ENCODE measurements at regions of chr4 and their contacts with region 1.

Region 1: GRCh38 chr4:58061970-58062369 is 951.8 kb upstream of the IGFBP7 start:
- DNase-seq: no peak
- ATAC-seq: no peak
- H3K4me3 ChIP-seq: no peak overlapping the region
- H3K27ac ChIP-seq: no peak overlapping the region
- H3K4me1 ChIP-seq: no peaks in the 10 kb centered on the region
- H3K27me3 ChIP-seq: no peaks in the 10 kb centered on the region
- CTCF ChIP-seq: peak in 4 of 9 donors; percentile 15 to 37 (median 26)

Region 2: GRCh38 chr4:57442831-57443291 is 619.1 kb before region 1 on chr4:
- intact Hi-C with region 1: loop called in 4 of 10 experiments (anchors 2 to 10 kb)
- DNase-seq: peak; percentile 24 to 44
- ATAC-seq: peak; percentile 68 to 85 (median 78)
- H3K4me3 ChIP-seq: no peak overlapping the region
- H3K27ac ChIP-seq: peak overlapping the region in 1 of 10 donors; percentile 7
- H3K4me1 ChIP-seq: peaks cover 0 to 9% (median 0%) of the 10 kb centered on the region in 9 donors
- H3K27me3 ChIP-seq: peaks cover 0 to 2% (median 0%) of the 10 kb centered on the region in 7 donors
- CTCF ChIP-seq: peak; percentile 36 to 82 (median 73)